Lower leg skin (tissue), 4 donors: ENCODE measurements at regions of chr2 and their contacts with region 1.

Region 1: DNA sequence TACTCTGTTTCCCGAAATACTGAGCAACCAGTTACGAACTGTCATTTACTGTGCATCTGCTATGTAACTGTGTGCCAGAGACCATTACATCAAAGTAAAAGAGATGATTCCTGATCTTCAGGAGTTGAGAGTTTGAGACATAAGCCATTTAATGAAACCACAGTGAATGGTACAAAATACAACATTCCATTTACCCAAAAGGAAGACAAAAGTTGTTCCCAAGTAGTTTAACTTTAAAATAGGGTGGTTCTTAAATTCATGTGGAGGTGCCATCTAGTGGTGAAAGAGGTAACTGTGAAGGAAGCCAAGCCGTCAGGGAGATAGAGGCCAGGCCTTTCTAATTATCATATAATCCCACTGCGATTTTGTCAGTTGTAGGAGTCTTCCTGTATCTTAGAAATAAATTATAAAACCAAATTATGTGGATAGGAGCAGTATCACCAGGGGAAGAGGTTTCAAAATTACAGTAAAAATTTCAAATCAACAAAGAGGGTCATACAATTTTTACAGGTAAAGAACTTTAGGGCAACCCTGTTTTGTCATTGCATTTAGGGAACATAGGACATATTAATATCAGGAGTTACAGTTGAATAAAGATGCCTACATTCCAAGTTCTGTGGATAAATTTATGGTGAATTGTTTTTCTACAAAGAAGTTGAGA is 67.7 kb downstream of the EPAS1 start:
- DNase-seq: peak in 1 of 2 donors; percentile 36
- H3K4me3 ChIP-seq: no peak overlapping the region
- CTCF ChIP-seq: peak in 1 of 3 donors; percentile 26
- POLR2A ChIP-seq: no peak

Region 2: DNA sequence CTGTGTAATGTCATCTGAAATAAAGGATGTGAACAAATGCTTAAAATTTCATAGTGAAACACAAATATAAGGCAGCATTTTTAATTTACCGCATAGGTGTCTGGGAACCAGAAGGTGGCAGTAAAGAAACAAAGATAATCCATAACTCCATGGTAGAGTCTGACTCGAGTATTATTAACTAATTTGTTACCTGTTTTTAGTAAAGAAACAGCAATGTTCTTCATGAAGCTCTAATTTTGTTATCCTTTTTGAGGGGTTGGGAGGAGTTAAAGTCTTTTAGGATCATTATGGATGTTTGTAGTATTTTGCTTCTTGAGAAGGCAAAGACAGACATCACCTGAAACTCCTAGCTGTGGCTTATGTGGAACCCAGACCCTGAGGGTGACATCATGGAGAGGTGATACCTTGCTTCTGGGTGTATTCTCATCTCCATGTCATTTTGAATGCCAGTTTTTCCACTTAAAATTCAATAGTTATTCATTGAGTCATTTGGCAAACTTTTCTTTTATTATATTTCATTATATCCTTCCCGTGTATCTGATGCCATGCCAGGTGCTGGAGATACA is 353.9 kb before region 1 on chr2:
- intact Hi-C with region 1: loop called (anchors 10 kb)
- DNase-seq: no peak
- H3K4me3 ChIP-seq: no peak overlapping the region
- CTCF ChIP-seq: no peak
- POLR2A ChIP-seq: no peak

Region 3: GRCh38 chr2:46067851-46068305 is 297.0 kb before region 1 on chr2:
- intact Hi-C with region 1: loop called (anchors 5 kb)
- DNase-seq: no peak
- H3K4me3 ChIP-seq: no peak overlapping the region
- CTCF ChIP-seq: no peak
- POLR2A ChIP-seq: no peak